PC-3 (cell line): ENCODE measurements at regions of chr5 and their contacts with region 1.

Region 1: GRCh38 chr5:54217826-54218503 is 92.4 kb downstream of the ARL15 start:
- DNase-seq: peak; percentile 70
- ATAC-seq: peak; percentile 74
- H3K4me3 ChIP-seq: no peak overlapping the region
- H3K27ac ChIP-seq: no peak overlapping the region
- H3K4me1 ChIP-seq: no peaks in the 10 kb centered on the region
- H3K27me3 ChIP-seq: no peaks in the 10 kb centered on the region
- CTCF ChIP-seq: peak; percentile 68

Region 2: DNA sequence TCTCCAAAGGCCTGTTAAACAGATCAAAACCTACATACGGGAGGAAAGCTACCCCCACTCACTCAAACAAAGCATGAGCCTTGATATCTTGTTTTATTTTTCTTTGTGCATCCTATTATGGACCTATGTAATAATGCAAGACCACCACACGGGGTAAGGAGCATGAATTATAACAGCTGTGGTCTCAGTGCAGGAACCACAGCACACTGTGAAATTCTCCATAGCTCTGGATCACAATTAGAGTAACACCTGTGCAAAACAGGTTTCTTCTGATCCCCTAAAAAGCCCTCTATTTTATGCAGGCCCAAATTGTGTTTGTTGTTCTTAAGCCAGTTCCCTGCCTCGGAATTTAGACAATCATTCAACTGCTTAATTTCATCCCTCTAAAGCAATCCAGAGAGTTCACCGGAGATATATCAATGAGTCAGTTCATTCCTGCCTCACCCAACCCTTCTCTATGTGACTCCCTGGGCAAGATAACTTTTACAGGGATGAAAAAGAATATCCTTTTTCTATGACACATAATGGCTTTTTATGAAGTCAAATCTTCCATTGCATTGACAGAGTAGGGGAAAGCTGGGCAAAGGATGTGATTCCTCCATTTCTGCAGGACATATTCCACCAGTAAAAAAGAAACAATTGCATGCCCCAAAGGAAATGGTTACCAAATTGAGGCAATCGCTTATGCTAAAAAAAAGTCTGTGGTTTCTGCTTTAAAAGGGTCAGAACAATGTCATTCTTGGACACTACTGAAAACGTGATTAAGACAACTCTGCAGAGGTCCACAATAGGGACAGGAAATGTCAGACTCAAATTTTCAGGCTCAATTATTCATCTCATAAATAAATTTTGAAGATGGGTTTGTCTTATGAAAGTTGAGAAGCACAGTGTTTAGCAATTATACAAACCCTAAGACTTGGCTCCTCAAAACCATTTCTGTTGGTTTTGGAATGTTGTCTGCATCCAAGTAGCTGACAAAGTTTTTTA is 779.2 kb before region 1 on chr5:
- CTCF ChIA-PET with region 1: no interaction called
- POLR2A ChIA-PET with region 1: no interaction called
- intact Hi-C with region 1: loop called (anchors 5 kb)
- DNase-seq: peak; percentile 79
- ATAC-seq: peak; percentile 96
- H3K4me3 ChIP-seq: no peak overlapping the region
- H3K27ac ChIP-seq: peak overlapping the region; percentile 87
- H3K4me1 ChIP-seq: peaks cover 29% of the 10 kb centered on the region
- H3K27me3 ChIP-seq: no peaks in the 10 kb centered on the region
- CTCF ChIP-seq: no peak

Region 3: DNA sequence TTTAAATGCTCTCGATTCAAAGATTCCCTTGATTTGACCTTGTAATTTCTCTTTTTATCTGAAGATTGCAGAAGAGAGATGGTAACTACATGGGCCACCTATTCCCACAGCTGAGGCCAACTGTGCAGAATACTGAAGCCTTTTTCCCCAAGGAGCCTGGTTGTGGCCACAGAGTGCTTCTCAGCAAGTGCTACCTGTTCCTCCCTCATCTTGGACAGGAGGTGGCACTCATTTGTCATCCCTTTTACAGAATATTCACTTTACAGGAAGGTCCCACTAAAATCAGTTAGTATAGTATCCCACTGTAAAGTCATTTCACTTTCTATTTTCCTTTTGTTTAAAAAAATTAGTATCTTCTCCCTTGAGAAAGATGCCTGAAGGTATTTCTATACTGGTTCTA is 254.0 kb before region 1 on chr5:
- CTCF ChIA-PET with region 1: no interaction called
- POLR2A ChIA-PET with region 1: no interaction called
- intact Hi-C with region 1: loop called (anchors 5 kb)
- DNase-seq: no peak
- ATAC-seq: 0 out of 2 replicates have a peak, but pooled peaks have one; percentile 29
- H3K4me3 ChIP-seq: no peak overlapping the region
- H3K27ac ChIP-seq: no peak overlapping the region
- H3K4me1 ChIP-seq: no peaks in the 10 kb centered on the region
- H3K27me3 ChIP-seq: no peaks in the 10 kb centered on the region
- CTCF ChIP-seq: peak; percentile 17; the same call in 1 of the 2 replicates

Region 4: GRCh38 chr5:54090495-54091084 is 127.4 kb before region 1 on chr5:
- CTCF ChIA-PET with region 1: no interaction called
- POLR2A ChIA-PET with region 1: no interaction called
- intact Hi-C with region 1: loop called (anchors 5 kb)
- DNase-seq: peak; percentile 23
- ATAC-seq: peak; percentile 54; the same call in 1 of the 2 replicates
- H3K4me3 ChIP-seq: no peak overlapping the region
- H3K27ac ChIP-seq: no peak overlapping the region
- H3K4me1 ChIP-seq: 0 out of 2 replicates have a peak, but pooled peaks cover 6% of the 10 kb centered on the region
- H3K27me3 ChIP-seq: no peaks in the 10 kb centered on the region
- CTCF ChIP-seq: peak; percentile 10; the same call in 1 of the 2 replicates

Region 5: DNA sequence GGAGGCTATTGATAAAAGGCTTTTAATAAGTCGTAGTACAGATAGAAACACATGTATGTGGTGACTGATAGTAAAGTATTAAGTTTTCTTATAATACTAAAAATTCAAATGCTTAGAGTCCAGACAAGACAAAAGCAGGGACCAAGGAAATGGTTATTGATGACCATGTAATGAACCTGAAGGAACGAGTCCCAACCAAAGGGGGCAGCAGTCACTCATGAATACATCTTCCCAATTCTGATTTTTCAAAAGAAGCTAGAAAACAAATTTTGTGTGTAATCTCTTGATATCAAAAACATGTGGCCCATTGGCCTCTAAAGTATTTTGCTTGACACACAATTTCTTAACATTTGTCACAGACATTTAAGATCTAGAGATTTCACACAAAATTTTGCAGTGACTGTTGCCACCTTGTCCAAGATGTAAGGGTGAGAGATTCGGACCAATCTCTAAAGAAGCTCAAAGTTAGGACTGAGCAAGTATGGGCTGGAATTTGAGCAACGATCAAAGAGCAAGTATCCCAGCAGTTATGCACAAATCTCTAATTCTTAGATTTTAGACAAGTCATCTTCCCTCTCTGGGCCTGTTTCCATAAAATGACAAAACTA is 25.6 kb after region 1 on chr5:
- CTCF ChIA-PET with region 1: no interaction called
- POLR2A ChIA-PET with region 1: no interaction called
- intact Hi-C with region 1: no loop called
- DNase-seq: peak; percentile 48
- ATAC-seq: no peak
- H3K4me3 ChIP-seq: no peak overlapping the region
- H3K27ac ChIP-seq: no peak overlapping the region
- H3K4me1 ChIP-seq: no peaks in the 10 kb centered on the region
- H3K27me3 ChIP-seq: no peaks in the 10 kb centered on the region
- CTCF ChIP-seq: peak; percentile 71